ENCODE measurements at regions of chr2 and their contacts with region 1.

Region 1: DNA sequence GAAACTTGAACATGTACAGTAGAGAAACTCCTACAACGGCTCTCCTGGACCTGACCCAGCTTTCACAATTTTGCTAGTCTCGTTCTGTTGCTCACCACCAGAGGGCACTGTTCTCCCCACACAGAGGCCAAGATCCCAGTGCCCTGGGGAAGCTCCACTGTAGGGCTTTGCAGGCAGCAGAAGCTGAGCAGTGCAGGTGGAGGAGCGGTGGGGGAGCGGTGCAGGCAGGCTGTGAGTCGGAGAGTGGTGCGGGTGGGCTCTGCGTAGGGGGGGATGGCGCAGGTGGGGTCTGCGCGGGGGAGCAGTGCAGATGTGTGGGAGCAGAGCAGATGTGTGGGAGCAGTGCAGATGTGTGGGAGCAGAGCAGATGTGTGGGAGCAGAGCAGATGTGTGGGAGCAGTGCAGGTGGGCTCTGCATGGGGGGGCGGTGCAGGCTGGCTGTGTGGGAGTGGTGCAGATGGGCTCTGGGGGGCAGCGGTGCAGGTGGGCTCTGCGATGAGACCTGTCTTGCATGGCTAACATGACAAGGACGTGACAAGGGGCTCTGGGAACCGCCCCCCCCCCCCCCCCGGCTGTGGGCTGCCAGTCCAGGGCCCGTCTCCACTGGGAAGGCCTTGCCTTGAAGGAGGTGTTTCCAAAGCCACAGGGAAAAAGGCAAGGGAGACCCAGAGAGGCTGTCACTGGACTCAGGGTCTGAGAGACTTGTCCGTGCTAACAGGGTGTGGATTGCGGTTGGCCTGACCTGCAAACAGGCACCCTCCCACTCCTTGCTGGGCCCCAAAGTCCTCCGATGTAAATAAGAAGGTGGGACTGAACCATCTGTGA is 7.3 kb downstream of the CYS1 start:
- DNase-seq: peak; percentile 36
- H3K4me3 ChIP-seq: no peak overlapping the region
- CTCF ChIP-seq: peak; percentile 84

Region 2: GRCh38 chr2:9519250-9519649 is 553.6 kb before region 1 on chr2:
- CTCF ChIA-PET with region 1: no interaction called
- POLR2A ChIA-PET with region 1: no interaction called
- DNase-seq: no peak
- H3K4me3 ChIP-seq: no peak overlapping the region
- CTCF ChIP-seq: no peak

Region 3: GRCh38 chr2:9799665-9800632 is 272.9 kb before region 1 on chr2:
- CTCF ChIA-PET with region 1: interaction called, 27 read pairs
- POLR2A ChIA-PET with region 1: no interaction called
- DNase-seq: no peak
- H3K4me3 ChIP-seq: no peak overlapping the region
- CTCF ChIP-seq: peak; percentile 100

Region 4: GRCh38 chr2:10057231-10058107 is 15.4 kb before region 1 on chr2:
- CTCF ChIA-PET with region 1: interaction called, 106 read pairs
- POLR2A ChIA-PET with region 1: no interaction called
- DNase-seq: no peak
- H3K4me3 ChIP-seq: peak overlapping the region; percentile 34
- CTCF ChIP-seq: no peak

Region 5: DNA sequence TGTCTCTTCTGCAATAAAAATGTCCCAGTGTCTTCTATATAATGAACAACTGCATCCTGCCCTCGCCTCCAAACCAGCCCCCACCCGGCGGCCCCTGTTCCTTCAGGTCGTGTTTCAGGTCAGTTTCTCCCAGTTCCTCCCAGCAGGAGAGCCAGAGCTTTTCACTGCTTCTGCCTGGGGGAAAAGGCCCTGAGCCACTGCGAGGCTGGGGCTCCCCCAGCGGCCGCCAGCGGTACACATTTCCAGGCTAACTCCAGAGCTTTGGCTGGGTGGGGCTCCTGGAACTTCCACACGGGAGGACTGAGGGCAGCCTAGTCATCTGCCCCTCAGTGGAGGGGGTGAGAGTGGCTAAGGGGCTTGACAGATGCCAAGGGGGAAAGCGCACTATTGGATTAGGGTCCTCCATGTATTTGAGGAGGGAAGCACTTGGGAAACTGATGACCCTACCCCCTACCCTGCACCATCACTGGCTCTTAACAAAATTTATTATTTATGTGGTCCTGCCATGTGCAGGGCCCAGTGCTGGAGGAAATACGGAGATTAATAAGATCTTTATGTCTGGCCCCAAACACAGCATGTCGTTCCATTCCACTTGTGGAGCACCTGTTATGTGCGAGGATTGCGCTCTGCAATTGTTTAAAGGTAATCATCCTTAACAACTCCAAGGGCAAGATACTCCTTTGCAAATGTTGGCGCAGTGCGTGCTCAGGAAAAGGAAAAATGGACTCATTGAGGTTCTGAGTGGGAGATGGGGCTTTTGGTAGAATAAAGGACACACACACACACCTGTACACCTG is 24.7 kb after region 1 on chr2:
- CTCF ChIA-PET with region 1: interaction called, 173 read pairs
- POLR2A ChIA-PET with region 1: no interaction called
- DNase-seq: no peak
- H3K4me3 ChIP-seq: no peak overlapping the region
- CTCF ChIP-seq: peak; percentile 97

Region 6: GRCh38 chr2:10424051-10424450 is 351.2 kb after region 1 on chr2:
- CTCF ChIA-PET with region 1: interaction called, 18 read pairs
- POLR2A ChIA-PET with region 1: no interaction called
- DNase-seq: peak; percentile 80
- H3K4me3 ChIP-seq: no peak overlapping the region
- CTCF ChIP-seq: no peak